PC-9 (cell line): ENCODE measurements at regions of chr19 and their contacts with region 1.

Region 1: GRCh38 chr19:8794823-8795222 is 37.3 kb downstream of the ZNF558 start:
- DNase-seq: no peak
- H3K4me3 ChIP-seq: no peak overlapping the region
- H3K27ac ChIP-seq: no peak overlapping the region
- H3K4me1 ChIP-seq: no peaks in the 10 kb centered on the region
- H3K27me3 ChIP-seq: peaks cover 56% of the 10 kb centered on the region
- CTCF ChIP-seq: no peak

Region 2: DNA sequence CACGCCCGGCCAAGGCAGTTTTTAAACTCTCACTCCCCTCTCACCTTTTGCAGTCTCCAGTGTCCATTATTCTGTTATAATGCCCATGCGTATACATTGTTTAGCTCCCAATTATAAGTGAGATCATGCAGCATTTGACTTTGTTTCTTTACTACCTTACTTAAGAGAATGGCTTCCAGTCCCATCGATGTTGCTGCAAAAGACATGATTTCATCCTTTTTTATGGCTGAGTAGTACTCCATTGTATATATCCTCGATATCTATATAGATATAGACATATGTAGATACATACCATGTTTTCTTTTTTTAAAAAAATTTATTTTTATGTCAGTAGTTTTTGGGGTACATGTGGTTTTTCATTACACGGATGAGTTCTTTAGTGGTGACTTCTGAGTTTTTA is 392.4 kb after region 1 on chr19:
- CTCF ChIA-PET with region 1: no interaction called
- POLR2A ChIA-PET with region 1: interaction called, 15 read pairs
- intact Hi-C with region 1: no loop called
- DNase-seq: no peak
- H3K4me3 ChIP-seq: no peak overlapping the region
- H3K27ac ChIP-seq: no peak overlapping the region
- H3K4me1 ChIP-seq: no peaks in the 10 kb centered on the region
- H3K27me3 ChIP-seq: peaks cover 29% of the 10 kb centered on the region
- CTCF ChIP-seq: no peak